ENCODE measurements at regions of chr11 and their contacts with region 1.

Region 1: GRCh38 chr11:73787643-73788537 is at the start of gene MRPL48:
- DNase-seq: peak; percentile 72
- ATAC-seq: peak; percentile 99
- H3K4me3 ChIP-seq: peak within 1 kb of the TSS; percentile 83
- H3K27ac ChIP-seq: peak within 1 kb of the TSS; percentile 83
- H3K4me1 ChIP-seq: peaks cover 3% of the 10 kb centered on the region; the same call in 1 of the 2 replicates
- H3K27me3 ChIP-seq: no peaks in the 10 kb centered on the region
- CTCF ChIP-seq: no peak
- EP300 ChIP-seq: 0 out of 4 replicates have a peak, but pooled peaks of 1 of the 2 experiments have one; percentile 7
- POLR2A ChIP-seq: peak; percentile 94
- RAD21 ChIP-seq: no peak
- polyA plus RNA-seq, gene MRPL48: 149 to 159 TPM

Region 2: GRCh38 chr11:73141848-73142286 is 646.0 kb before region 1 on chr11:
- CTCF ChIA-PET with region 1: no interaction called
- POLR2A ChIA-PET with region 1: no interaction called
- RAD21 ChIA-PET with region 1: no interaction called
- SMC1A ChIA-PET with region 1: no interaction called
- in situ Hi-C with region 1: no loop called
- intact Hi-C with region 1: no loop called
- DNase-seq: no peak
- ATAC-seq: peak; percentile 25
- H3K4me3 ChIP-seq: peak overlapping the region; percentile 90
- H3K27ac ChIP-seq: peak overlapping the region; percentile 99
- H3K4me1 ChIP-seq: peaks cover 36% of the 10 kb centered on the region
- H3K27me3 ChIP-seq: no peaks in the 10 kb centered on the region
- CTCF ChIP-seq: 0 out of 6 replicates have a peak, but pooled peaks of 1 of the 3 experiments have one; percentile 0
- EP300 ChIP-seq: no peak
- POLR2A ChIP-seq: peak; percentile 65
- RAD21 ChIP-seq: no peak

Region 3: GRCh38 chr11:73760679-73761402 is 27.0 kb before region 1 on chr11 and contains the start of gene RAB6A:
- CTCF ChIA-PET with region 1: interaction called, 4 read pairs
- POLR2A ChIA-PET with region 1: interaction called, 13 read pairs
- RAD21 ChIA-PET with region 1: interaction called, 6 read pairs
- SMC1A ChIA-PET with region 1: interaction called, 4 read pairs
- in situ Hi-C with region 1: no loop called
- intact Hi-C with region 1: no loop called
- DNase-seq: peak; percentile 98
- ATAC-seq: peak; percentile 94
- H3K4me3 ChIP-seq: peak within 1 kb of the TSS; percentile 98
- H3K27ac ChIP-seq: peak within 1 kb of the TSS; percentile 78
- H3K4me1 ChIP-seq: no peaks in the 10 kb centered on the region; the same call in 1 of the 2 replicates
- H3K27me3 ChIP-seq: no peaks in the 10 kb centered on the region
- CTCF ChIP-seq: peak; percentile 6 to 31 (median 28); a peak in 3 of 6 replicates
- EP300 ChIP-seq: no peak
- POLR2A ChIP-seq: peak; percentile 87
- RAD21 ChIP-seq: no peak
- polyA plus RNA-seq, gene RAB6A: 9.8 to 10.9 TPM

Region 4: GRCh38 chr11:74170694-74171629 is 383.1 kb after region 1 on chr11 and contains the starts of genes C2CD3 and PPME1:
- CTCF ChIA-PET with region 1: no interaction called
- POLR2A ChIA-PET with region 1: interaction called, 14 read pairs
- RAD21 ChIA-PET with region 1: no interaction called
- SMC1A ChIA-PET with region 1: no interaction called
- in situ Hi-C with region 1: no loop called
- intact Hi-C with region 1: no loop called
- DNase-seq: peak; percentile 100
- ATAC-seq: peak; percentile 96
- H3K4me3 ChIP-seq: peak within 1 kb of the TSS; percentile 95
- H3K27ac ChIP-seq: peak within 1 kb of the TSS; percentile 69
- H3K4me1 ChIP-seq: peaks cover 3% of the 10 kb centered on the region; the same call in 1 of the 2 replicates
- H3K27me3 ChIP-seq: no peaks in the 10 kb centered on the region
- CTCF ChIP-seq: peak; percentile 11 to 36 (median 11); a peak in 2 of 6 replicates
- EP300 ChIP-seq: 0 out of 4 replicates have a peak, but pooled peaks of 1 of the 2 experiments have one; percentile 16
- POLR2A ChIP-seq: peak; percentile 99
- RAD21 ChIP-seq: 0 out of 2 replicates have a peak, but pooled peaks have one; percentile 1
- polyA plus RNA-seq, gene C2CD3: 2.3 to 2.7 TPM
- polyA plus RNA-seq, gene PPME1: 3.1 to 3.3 TPM